GM12878 (cell line): ENCODE measurements at regions of chr4 and their contacts with region 1.

Region 1: DNA sequence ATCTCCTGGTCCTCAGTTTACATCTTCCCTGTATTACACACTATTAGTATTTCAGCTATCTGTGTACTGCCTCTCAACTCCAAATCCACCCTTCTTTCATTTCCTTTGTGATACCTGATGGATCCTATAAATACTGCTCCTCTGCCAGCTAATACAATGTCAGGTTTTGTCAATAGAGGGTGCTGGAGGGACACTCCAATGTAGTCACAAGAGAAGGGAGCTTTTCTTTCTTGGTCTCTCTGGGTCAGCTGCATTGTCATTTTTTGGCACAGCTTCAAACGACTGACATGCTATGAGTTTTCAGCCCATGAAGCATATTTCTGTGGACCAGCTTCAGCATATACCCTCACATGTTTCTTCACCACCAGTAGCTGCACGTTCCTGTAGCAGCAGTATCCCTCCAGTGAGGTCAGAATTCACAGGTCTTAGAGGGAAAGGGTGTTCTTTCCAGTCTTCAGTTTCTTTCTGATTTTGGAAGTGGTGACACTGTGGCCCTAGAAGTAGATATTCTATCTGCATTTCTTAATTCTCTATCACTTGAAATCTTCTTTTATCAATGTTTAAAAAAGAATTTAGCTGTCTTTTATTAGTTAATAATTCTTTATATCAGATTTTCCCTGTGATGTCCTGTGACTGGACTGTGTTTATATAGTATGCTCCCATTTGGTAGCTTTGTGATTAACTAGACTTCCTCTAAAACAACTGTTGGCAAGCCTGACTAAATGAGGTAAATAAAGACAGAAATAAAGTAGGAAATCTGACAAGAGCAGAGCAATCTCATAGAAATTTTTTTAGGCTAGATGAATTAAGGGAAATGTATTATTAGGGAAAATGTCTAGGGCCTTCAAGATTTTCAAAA is 60.6 kb downstream of the GABRA2 start:
- DNase-seq: no peak
- ATAC-seq: peak; percentile 85
- H3K4me3 ChIP-seq: no peak overlapping the region
- H3K27ac ChIP-seq: no peak overlapping the region
- H3K4me1 ChIP-seq: no peaks in the 10 kb centered on the region
- H3K27me3 ChIP-seq: no peaks in the 10 kb centered on the region
- CTCF ChIP-seq: peak; percentile 46 to 52 (median 47); a peak in 3 of 6 replicates
- EP300 ChIP-seq: no peak
- POLR2A ChIP-seq: no peak
- RAD21 ChIP-seq: peak; percentile 55

Region 2: GRCh38 chr4:46648088-46648744 is 318.9 kb after region 1 on chr4:
- CTCF ChIA-PET with region 1: interaction called, 41 read pairs
- POLR2A ChIA-PET with region 1: interaction called, 4 read pairs
- RAD21 ChIA-PET with region 1: interaction called, 29 read pairs
- SMC1A ChIA-PET with region 1: interaction called, 17 read pairs
- in situ Hi-C with region 1: no loop called
- intact Hi-C with region 1: loop called (anchors 1 kb)
- DNase-seq: no peak
- ATAC-seq: peak; percentile 99
- H3K4me3 ChIP-seq: no peak overlapping the region
- H3K27ac ChIP-seq: no peak overlapping the region
- H3K4me1 ChIP-seq: no peaks in the 10 kb centered on the region
- H3K27me3 ChIP-seq: no peaks in the 10 kb centered on the region
- CTCF ChIP-seq: peak; percentile 66 to 80 (median 75)
- EP300 ChIP-seq: no peak
- POLR2A ChIP-seq: no peak
- RAD21 ChIP-seq: peak; percentile 75